Activated CD4-positive, alpha-beta T cell treated with anti-CD3 and anti-CD28 coated beads for 36 hours (primary cell): ENCODE measurements at regions of chrX and their contacts with region 1.

Region 1: DNA sequence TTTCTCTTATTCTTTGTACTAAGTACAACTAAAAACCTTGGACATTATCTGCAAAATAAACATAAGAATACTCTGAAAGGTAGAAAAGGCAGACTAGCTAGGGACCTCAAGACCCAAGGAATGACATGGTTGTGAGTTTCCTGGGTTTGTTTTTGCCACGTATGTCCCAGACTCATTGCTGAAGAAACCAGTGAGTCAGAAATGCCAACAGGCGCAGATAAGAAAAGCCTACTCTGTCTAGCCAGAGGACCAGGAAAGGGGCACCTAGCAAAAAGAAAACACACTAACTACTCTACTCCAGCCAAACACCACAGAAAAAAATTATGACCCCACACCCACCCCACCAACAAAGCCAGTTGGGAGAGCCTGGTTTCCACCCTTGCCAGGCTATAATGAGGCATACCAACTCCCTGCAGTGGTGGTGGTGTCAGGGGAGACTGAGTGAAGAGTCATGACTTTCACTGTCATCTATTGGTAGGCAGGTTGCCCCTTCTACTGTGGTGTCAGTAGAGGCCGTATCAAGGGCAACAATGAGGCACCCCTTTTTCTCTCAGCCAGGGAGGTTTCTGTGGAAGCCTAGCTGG is 10.9 kb downstream of the MTMR1 start:
- DNase-seq: peak; percentile 52
- ATAC-seq: peak; percentile 91
- H3K4me3 Mint-ChIP-seq: peak overlapping the region; percentile 21
- H3K27ac Mint-ChIP-seq: peak overlapping the region; percentile 88
- H3K4me1 Mint-ChIP-seq: peaks cover 49% of the 10 kb centered on the region
- H3K27me3 Mint-ChIP-seq: no peaks in the 10 kb centered on the region

Region 2: GRCh38 chrX:150715184-150715583 is 11.1 kb after region 1 on chrX:
- CTCF ChIA-PET with region 1: interaction called, 26 read pairs
- POLR2A ChIA-PET with region 1: no interaction called
- intact Hi-C with region 1: no loop called
- DNase-seq: no peak
- ATAC-seq: no peak
- H3K4me3 Mint-ChIP-seq: no peak overlapping the region
- H3K27ac Mint-ChIP-seq: peak overlapping the region; percentile 47
- H3K4me1 Mint-ChIP-seq: peaks cover 29% of the 10 kb centered on the region
- H3K27me3 Mint-ChIP-seq: no peaks in the 10 kb centered on the region

Region 3: DNA sequence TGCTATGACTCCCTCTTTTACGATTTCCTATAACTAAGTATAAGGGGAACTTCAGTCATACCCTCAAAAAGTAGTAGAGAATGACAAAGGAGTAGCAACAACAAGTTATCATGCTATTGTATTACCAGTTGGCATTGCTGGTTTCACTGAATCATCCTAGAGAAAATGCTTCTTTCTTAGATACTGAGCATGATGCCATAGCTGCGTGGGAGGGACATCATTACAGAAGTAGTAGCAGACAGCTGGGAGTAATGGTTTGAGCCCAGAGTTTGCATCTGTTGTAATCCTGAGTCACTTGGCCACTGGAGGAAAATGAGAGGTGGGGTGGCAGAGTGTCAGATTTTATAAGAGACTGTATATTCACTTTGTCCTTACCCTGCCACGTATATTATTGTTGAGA is 27.7 kb after region 1 on chrX:
- CTCF ChIA-PET with region 1: no interaction called
- POLR2A ChIA-PET with region 1: no interaction called
- intact Hi-C with region 1: loop called in 1 of 2 experiments (anchors 1 kb)
- DNase-seq: peak; percentile 81
- ATAC-seq: peak; percentile 95
- H3K4me3 Mint-ChIP-seq: no peak overlapping the region
- H3K27ac Mint-ChIP-seq: peak overlapping the region; percentile 82
- H3K4me1 Mint-ChIP-seq: peaks cover 31% of the 10 kb centered on the region
- H3K27me3 Mint-ChIP-seq: no peaks in the 10 kb centered on the region

Region 4: DNA sequence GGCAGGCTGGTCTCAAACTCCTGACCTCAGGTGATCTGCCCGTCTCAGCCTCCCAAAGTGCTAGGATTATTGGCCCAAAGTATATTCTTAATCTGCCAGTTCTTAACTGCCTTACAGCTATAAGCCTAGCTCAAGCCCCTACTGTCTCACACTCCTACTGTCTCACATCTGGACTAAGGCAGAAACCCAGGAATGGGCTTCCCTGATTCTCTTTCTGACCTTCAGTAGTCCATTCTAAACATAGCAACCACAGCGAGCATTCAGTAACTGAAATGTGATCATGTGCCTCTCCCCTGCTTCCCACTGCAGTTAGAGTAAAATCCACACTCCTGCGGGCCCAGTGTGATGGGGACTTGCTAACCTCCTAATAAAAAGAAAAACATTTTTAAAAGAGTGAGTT is 48.0 kb after region 1 on chrX:
- CTCF ChIA-PET with region 1: no interaction called
- POLR2A ChIA-PET with region 1: no interaction called
- intact Hi-C with region 1: no loop called
- DNase-seq: no peak
- ATAC-seq: no peak
- H3K4me3 Mint-ChIP-seq: no peak overlapping the region
- H3K27ac Mint-ChIP-seq: no peak overlapping the region
- H3K4me1 Mint-ChIP-seq: no peaks in the 10 kb centered on the region
- H3K27me3 Mint-ChIP-seq: no peaks in the 10 kb centered on the region

Region 5: GRCh38 chrX:150848914-150849365 is 144.8 kb after region 1 on chrX:
- CTCF ChIA-PET with region 1: no interaction called
- POLR2A ChIA-PET with region 1: no interaction called
- intact Hi-C with region 1: no loop called
- DNase-seq: peak; percentile 8
- ATAC-seq: peak; percentile 23
- H3K4me3 Mint-ChIP-seq: no peak overlapping the region
- H3K27ac Mint-ChIP-seq: no peak overlapping the region
- H3K4me1 Mint-ChIP-seq: peaks cover 9% of the 10 kb centered on the region
- H3K27me3 Mint-ChIP-seq: no peaks in the 10 kb centered on the region